Kidney (tissue), 22 donors: ENCODE measurements at regions of chr1 and their contacts with region 1.

Region 1: DNA sequence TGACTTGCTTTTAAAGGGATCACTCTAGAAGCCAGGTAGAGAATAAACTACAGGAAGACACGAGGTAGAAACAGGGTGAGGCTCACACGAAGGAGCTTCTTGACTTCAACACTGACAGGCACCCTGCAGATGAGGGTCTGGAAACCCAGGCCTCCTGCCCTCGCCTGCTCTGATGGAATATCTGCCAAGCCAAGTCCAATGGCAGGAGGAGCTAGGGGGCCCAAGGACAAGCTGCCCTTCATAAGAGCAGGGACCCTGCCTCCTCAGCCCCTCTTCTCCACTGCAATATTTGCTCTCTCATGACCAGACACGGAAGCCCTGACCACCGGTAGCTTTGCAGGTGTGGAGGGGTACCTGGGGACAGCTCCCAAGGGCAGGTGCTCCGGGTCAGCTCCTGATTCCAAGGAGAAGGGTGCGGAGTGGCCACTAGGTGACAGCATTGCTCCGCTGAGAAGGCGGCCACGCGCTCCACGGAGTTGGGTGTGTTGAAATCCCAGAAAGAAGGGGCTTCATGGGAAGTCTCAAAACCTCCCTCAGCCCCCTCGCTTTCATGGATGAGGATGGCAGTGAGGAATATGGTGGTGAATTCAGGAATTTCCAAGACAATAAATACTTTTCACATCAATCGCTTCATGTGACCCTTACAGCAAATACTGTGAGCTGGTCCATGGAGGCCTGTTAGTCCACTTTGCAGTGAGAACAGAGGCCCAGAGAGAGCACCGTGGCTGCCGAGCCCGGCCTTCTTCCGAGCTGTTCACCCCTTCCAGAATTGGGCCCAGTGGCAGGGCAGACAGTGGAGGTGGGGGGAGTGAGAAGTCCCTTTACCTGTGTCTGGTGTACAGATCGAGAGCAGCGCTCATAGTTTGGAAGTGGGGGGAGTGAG is 33.2 kb upstream of the PAX7 start:
- DNase-seq: peak; percentile 62 to 84 (median 74)
- H3K4me3 ChIP-seq: no peak overlapping the region
- H3K27ac ChIP-seq: no peak overlapping the region
- H3K4me1 ChIP-seq: no peaks in the 10 kb centered on the region
- H3K27me3 ChIP-seq: no peaks in the 10 kb centered on the region
- CTCF ChIP-seq: peak; percentile 93

Region 2: GRCh38 chr1:18820791-18821641 is 223.6 kb after region 1 on chr1:
- intact Hi-C with region 1: loop called (anchors 2 kb)
- DNase-seq: peak; percentile 85 to 92 (median 91)
- H3K4me3 ChIP-seq: no peak overlapping the region
- H3K27ac ChIP-seq: no peak overlapping the region
- H3K4me1 ChIP-seq: peaks cover 0 to 4% (median 0%) of the 10 kb centered on the region in 3 donors
- H3K27me3 ChIP-seq: peaks cover 7% of the 10 kb centered on the region
- CTCF ChIP-seq: peak; percentile 83